ENCODE measurements at regions of chr20 and their contacts with region 1.

Region 1: GRCh38 chr20:3276680-3277015 is 37.7 kb upstream of the SLC4A11 start:
- DNase-seq: no peak
- ATAC-seq: peak in 3 of 4 donors; percentile 11 to 39 (median 14)
- H3K4me3 ChIP-seq: no peak overlapping the region
- H3K27ac ChIP-seq: no peak overlapping the region
- H3K4me1 ChIP-seq: peaks cover 0 to 14% (median 0%) of the 10 kb centered on the region in 12 donors
- H3K27me3 ChIP-seq: no peaks in the 10 kb centered on the region
- CTCF ChIP-seq: peak in 5 of 12 donors; percentile 15 to 23 (median 21)
- POLR2A ChIP-seq: no peak

Region 2: DNA sequence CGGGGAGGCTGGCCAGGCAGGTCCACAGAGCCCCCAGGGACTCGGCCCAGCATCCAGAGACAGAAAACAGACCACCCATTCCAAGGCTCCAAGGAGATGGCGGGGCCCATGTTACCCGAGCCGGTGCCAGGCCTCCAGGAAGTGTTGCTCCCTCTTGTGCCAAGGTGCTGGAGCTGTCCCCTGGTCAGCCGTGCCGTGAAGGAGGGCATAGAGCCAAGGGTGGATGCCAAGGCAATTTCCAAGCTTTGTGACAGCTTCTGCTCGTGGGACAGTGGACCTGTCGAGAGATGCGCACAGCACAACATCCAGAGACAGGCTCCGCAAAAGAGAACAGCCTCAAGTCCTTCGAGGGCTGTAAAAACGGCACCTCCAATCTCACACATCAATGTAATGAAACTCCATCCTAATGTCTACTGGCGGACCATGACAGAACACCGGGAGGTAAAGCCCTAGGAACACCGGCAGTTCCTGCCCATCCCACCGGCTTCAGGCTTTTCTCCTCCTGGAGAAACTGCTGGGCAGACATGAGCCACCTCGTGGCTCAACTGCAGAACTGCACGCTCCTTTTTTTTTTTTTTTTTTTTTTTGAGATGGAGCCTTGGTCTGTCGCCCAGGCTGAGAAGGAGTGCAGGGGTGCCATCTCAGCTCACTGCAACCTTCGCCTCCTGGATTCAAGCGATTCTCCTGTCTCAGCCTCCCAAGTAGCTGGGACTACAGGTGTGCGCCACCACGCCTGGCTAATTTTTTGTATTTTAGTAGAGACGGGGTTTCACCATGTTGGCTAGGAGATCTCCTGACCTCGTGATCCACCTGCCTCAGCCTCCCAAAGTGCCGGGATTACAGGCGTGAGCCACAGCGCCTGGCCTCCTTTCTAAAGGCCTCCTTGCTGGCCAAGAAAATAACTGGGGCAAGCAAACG is 161.2 kb before region 1 on chr20:
- intact Hi-C with region 1: loop called in 1 of 10 experiments (anchors 10 kb)
- DNase-seq: peak in 1 of 5 donors; percentile 53
- ATAC-seq: peak in 3 of 4 donors; percentile 49 to 59 (median 50)
- H3K4me3 ChIP-seq: no peak overlapping the region
- H3K27ac ChIP-seq: no peak overlapping the region
- H3K4me1 ChIP-seq: peaks cover 0 to 10% (median 2%) of the 10 kb centered on the region in 12 donors
- H3K27me3 ChIP-seq: no peaks in the 10 kb centered on the region
- CTCF ChIP-seq: peak; percentile 64 to 83 (median 74)
- POLR2A ChIP-seq: no peak

Region 3: GRCh38 chr20:3137492-3137891 is 139.2 kb before region 1 on chr20:
- intact Hi-C with region 1: no loop called
- DNase-seq: no peak
- ATAC-seq: no peak
- H3K4me3 ChIP-seq: no peak overlapping the region
- H3K27ac ChIP-seq: no peak overlapping the region
- H3K4me1 ChIP-seq: no peaks in the 10 kb centered on the region
- H3K27me3 ChIP-seq: no peaks in the 10 kb centered on the region
- CTCF ChIP-seq: no peak
- POLR2A ChIP-seq: no peak

Region 4: GRCh38 chr20:3218307-3218988 is 58.2 kb before region 1 on chr20:
- intact Hi-C with region 1: loop called in 1 of 10 experiments (anchors 10 kb)
- DNase-seq: peak; percentile 52 to 83 (median 57)
- ATAC-seq: peak; percentile 8 to 87 (median 74)
- H3K4me3 ChIP-seq: peak overlapping the region in 2 of 12 donors; percentile 7
- H3K27ac ChIP-seq: no peak overlapping the region
- H3K4me1 ChIP-seq: peaks cover 0 to 14% (median 3%) of the 10 kb centered on the region in 12 donors
- H3K27me3 ChIP-seq: no peaks in the 10 kb centered on the region
- CTCF ChIP-seq: peak; percentile 88 to 95 (median 94)
- POLR2A ChIP-seq: no peak

Region 5: GRCh38 chr20:5205348-5206210 is 1928.9 kb after region 1 on chr20:
- intact Hi-C with region 1: no loop called
- DNase-seq: peak; percentile 55 to 77 (median 73)
- ATAC-seq: peak; percentile 59 to 92 (median 88)
- H3K4me3 ChIP-seq: no peak overlapping the region
- H3K27ac ChIP-seq: no peak overlapping the region
- H3K4me1 ChIP-seq: peaks cover 0 to 24% (median 0%) of the 10 kb centered on the region in 12 donors
- H3K27me3 ChIP-seq: no peaks in the 10 kb centered on the region
- CTCF ChIP-seq: peak; percentile 75 to 93 (median 86)
- POLR2A ChIP-seq: no peak

Measured in heart left ventricle (tissue), 16 donors.